Dendritic cell treated with granulocyte-macrophage colony-stimulating factor and Interleukin-4, amounts not matched to agents 40 ng/mL and 50 ng/mL, for 4 days (primary cell): ENCODE measurements at regions of chr19 and their contacts with region 1.

Region 1: DNA sequence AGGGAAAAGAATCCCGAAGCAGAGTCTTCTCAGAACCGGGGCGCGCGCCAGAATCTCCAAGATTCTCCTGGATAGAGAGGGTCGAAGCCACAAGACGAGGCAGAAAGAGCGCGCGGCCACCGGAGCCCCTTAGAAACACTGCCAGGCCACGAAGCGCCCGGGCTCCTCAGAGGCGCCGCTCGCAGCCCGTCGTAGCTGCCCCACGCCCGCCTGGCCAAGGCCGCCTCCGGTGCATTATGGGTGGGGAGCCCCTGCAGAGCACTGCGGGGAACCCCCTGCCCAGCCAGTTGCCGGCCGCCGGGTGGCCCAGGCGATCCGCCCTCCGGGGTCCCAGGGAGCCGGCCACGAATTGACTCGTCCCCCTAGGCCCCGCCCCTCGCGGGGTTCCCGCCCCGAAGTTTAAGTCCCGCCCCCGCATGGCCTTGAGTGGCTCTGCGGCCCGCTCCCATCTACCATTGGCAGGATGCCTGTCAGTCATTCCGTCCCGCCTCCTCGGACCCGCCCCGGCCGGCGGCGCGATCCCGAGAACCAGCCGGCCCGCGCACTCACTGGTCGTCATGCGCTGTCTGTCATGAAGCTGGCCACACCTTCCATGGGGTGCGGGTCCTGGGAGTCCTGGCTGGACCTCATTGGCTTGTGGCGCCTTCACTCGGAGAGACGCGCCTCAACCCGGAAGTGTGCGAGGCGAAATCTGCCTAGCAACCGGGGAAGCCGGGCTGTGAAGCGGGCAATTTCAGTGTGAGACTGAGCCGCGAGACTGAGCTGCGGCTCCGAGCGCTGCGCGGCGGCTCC is 20.2 kb upstream of the GATAD2A start:
- H3K4me3 Mint-ChIP-seq: peak overlapping the region; percentile 98
- H3K27ac Mint-ChIP-seq: peak overlapping the region; percentile 98
- H3K4me1 Mint-ChIP-seq: peaks cover 73% of the 10 kb centered on the region
- H3K27me3 Mint-ChIP-seq: no peaks in the 10 kb centered on the region

Region 2: DNA sequence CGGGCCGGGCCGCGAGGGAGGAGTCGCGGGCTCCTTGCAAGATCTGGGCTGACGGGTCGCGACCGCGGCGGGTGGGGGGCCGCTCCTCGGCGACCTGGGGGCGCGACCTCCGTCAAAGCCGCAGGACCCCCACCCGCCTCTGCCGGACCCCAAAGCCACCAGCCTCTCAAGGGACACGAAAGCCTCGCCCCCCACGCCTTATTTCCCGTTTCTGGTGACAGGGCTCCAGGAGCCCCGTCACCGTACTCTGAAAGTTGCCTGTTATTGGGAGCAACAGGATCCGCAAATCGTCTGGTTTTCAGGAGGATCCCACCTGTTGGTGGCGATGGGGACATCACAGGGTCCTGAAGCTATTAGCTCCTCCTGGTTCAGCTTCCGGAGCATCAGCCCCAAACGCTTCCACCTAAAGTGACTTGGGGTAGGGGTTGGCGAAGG is 64.1 kb before region 1 on chr19:
- intact Hi-C with region 1: no loop called
- H3K4me3 Mint-ChIP-seq: peak overlapping the region; percentile 95
- H3K27ac Mint-ChIP-seq: peak overlapping the region; percentile 99
- H3K4me1 Mint-ChIP-seq: peaks cover 39% of the 10 kb centered on the region
- H3K27me3 Mint-ChIP-seq: no peaks in the 10 kb centered on the region

Region 3: DNA sequence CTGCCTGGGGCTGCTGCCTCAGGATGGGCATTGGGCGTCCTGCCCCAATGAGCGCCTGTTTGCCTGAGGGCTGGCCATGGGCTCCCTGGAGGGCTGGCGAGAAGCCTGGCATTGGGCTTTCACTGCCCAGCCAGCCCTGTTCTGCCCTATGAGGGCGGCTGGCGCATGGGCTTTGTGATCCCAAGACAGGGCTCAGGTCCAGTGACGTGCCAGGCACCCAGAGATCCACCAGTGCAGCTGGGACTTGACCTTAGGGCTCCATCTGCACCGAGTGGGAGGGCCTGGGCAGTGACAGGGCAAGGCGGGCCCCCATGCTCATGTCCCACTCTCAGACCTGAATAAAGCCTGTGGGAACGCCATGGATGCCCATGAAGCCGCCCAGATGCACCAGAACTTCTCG is 30.4 kb before region 1 on chr19:
- intact Hi-C with region 1: no loop called
- H3K4me3 Mint-ChIP-seq: no peak overlapping the region
- H3K27ac Mint-ChIP-seq: no peak overlapping the region
- H3K4me1 Mint-ChIP-seq: no peaks in the 10 kb centered on the region
- H3K27me3 Mint-ChIP-seq: no peaks in the 10 kb centered on the region

Region 4: DNA sequence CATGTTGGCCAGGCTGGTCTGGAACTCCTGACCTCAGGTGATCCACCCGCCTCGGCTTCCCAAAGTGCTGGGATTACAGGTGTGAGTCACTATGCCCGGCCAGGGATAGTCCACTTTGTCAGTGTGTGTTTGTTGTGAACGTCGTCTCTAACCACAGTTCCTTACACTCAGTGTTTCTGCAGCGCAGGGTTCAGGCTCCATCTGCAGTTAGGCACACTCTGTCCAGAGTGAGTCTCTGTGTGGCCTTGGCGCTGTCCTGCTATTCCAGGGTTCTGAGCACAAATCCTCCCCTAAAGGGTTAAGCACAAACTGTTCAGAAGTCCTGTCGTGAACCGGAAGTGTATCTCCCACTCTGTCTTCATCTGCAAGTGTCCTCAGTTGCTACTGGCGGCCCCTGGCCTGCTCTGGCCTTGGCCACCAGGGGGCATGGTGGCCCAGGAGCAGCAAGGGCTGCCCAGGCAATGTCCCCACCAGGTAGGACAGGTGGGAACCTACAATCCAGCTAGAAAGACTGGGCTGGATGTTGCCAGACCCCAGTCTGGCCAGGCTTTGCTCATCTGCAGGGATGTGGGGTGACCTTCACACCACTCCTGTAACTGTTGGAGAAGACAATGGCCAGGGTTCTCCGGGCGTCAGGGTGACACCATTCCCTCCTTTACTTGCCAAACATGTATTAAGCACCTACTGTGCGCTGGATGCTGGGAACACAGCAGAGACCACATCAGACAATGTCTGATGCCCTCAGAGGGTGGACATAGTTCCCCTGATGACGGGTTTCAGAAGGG is 18.5 kb before region 1 on chr19:
- intact Hi-C with region 1: loop called (anchors 2 kb)
- H3K4me3 Mint-ChIP-seq: no peak overlapping the region
- H3K27ac Mint-ChIP-seq: peak overlapping the region; percentile 72
- H3K4me1 Mint-ChIP-seq: peaks cover 23% of the 10 kb centered on the region
- H3K27me3 Mint-ChIP-seq: no peaks in the 10 kb centered on the region